ENCODE measurements at regions of chr14 and their contacts with region 1.

Region 1: GRCh38 chr14:55430024-55430690 is 10.3 kb downstream of the TBPL2 start:
- DNase-seq: peak; percentile 71
- H3K4me3 ChIP-seq: no peak overlapping the region
- H3K27ac ChIP-seq: no peak overlapping the region
- H3K4me1 ChIP-seq: no peaks in the 10 kb centered on the region
- H3K27me3 ChIP-seq: no peaks in the 10 kb centered on the region
- CTCF ChIP-seq: peak in 3 of 4 experiments; percentile 36 to 65 (median 55)
- POLR2A ChIP-seq: no peak

Region 2: GRCh38 chr14:55212634-55213033 is 217.5 kb before region 1 on chr14:
- intact Hi-C with region 1: loop called (anchors 5 kb)
- DNase-seq: no peak
- H3K4me3 ChIP-seq: no peak overlapping the region
- H3K27ac ChIP-seq: no peak overlapping the region
- H3K4me1 ChIP-seq: no peaks in the 10 kb centered on the region
- H3K27me3 ChIP-seq: no peaks in the 10 kb centered on the region
- CTCF ChIP-seq: no peak
- POLR2A ChIP-seq: no peak

Region 3: GRCh38 chr14:56482310-56482911 is 1052.3 kb after region 1 on chr14:
- intact Hi-C with region 1: loop called (anchors 5 kb)
- DNase-seq: no peak
- H3K4me3 ChIP-seq: no peak overlapping the region
- H3K27ac ChIP-seq: no peak overlapping the region
- H3K4me1 ChIP-seq: no peaks in the 10 kb centered on the region
- H3K27me3 ChIP-seq: no peaks in the 10 kb centered on the region
- CTCF ChIP-seq: no peak
- POLR2A ChIP-seq: no peak